Gastrocnemius medialis (tissue), 4 donors: ENCODE measurements at regions of chr3 and their contacts with region 1.

Region 1: GRCh38 chr3:122679085-122679881 is 1.4 kb upstream of the PARP14 start:
- DNase-seq: peak; percentile 39 to 68
- ATAC-seq: peak; percentile 51 to 74
- H3K4me3 ChIP-seq: peak overlapping the region; percentile 84 to 98 (median 98)
- H3K27ac ChIP-seq: peak overlapping the region; percentile 84 to 87 (median 86)
- H3K4me1 ChIP-seq: peaks cover 21 to 24% of the 10 kb centered on the region in 2 donors
- H3K27me3 ChIP-seq: no peaks in the 10 kb centered on the region
- CTCF ChIP-seq: peak; percentile 71 to 84 (median 80)
- POLR2A ChIP-seq: no peak

Region 2: DNA sequence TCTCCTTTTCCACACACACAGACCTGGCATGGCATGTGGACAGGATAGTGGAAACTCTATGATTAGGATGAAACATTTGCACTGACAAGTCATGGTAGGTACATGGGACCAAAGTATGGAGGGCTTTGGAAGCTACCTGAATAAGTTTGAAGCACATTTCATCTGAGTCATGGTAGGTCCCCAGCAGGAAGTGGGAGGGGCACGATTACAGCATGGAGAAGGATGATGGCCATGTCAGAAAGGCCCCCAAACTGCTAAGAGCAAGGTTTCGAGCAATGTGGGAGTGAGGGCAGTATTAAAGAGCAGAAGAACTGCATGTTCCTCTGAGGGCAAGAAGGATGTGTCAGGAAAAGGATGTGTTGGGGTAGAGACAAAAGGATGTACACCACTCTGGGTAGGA is 405.8 kb before region 1 on chr3:
- in situ Hi-C with region 1: no loop called
- intact Hi-C with region 1: no loop called
- DNase-seq: no peak
- ATAC-seq: no peak
- H3K4me3 ChIP-seq: no peak overlapping the region
- H3K27ac ChIP-seq: no peak overlapping the region
- H3K4me1 ChIP-seq: no peaks in the 10 kb centered on the region
- H3K27me3 ChIP-seq: no peaks in the 10 kb centered on the region
- CTCF ChIP-seq: no peak
- POLR2A ChIP-seq: no peak

Region 3: DNA sequence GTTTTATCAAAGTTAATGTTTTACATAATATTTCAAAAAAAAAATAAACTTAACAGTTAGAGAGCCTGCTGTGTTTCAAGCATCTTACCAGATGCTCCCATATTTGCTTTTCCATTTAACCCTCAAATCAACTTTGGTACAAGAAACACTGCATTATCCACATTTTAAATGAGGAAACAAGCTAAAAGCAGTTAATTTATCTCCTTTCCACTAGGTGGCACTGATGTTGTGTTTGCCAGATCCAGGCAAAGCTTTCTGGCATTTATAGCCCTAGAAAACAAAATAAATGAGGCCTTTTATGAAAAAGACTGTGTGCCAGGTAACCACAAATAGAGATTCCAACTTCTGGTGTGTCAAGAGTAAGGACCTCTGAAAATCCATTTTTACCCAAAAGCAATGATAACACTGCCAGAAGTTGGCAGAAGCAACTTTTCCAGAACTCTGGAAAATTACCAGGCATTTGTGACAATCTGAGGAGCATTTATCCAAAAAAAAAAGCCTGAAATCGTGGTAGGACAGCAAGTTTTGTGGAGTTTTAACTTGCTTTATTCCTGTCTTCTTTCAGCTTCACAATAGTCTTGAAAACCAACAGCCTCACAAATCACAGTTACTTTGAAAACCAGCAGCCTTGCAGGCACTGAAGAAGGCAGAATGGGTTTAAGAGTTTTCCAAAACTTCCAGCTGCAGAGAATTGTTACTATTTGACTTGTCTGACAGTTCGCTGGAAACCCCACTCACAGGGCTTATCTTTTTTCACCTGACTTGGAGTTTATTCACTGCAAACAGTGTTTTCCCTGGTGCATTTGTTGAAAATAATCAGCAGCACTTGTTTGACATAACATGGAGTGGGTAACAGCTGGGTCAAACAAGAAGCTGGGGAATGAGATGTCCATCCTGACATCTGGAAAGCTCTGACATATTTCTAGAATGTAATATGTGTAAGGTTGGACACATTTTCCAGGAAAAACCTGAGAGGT is 286.1 kb before region 1 on chr3:
- in situ Hi-C with region 1: loop called (anchors 5 to 10 kb)
- intact Hi-C with region 1: loop called (anchors 2 kb)
- DNase-seq: no peak
- ATAC-seq: peak in 1 of 2 donors; percentile 37
- H3K4me3 ChIP-seq: no peak overlapping the region
- H3K27ac ChIP-seq: peak overlapping the region in 3 of 4 donors; percentile 6 to 29 (median 9)
- H3K4me1 ChIP-seq: peaks cover 0 to 23% of the 10 kb centered on the region in 2 donors
- H3K27me3 ChIP-seq: no peaks in the 10 kb centered on the region
- CTCF ChIP-seq: peak; percentile 54 to 83 (median 70)
- POLR2A ChIP-seq: no peak

Region 4: GRCh38 chr3:122458992-122459391 is 220.3 kb before region 1 on chr3:
- in situ Hi-C with region 1: no loop called
- intact Hi-C with region 1: loop called (anchors 5 kb)
- DNase-seq: no peak
- ATAC-seq: peak; percentile 33 to 42
- H3K4me3 ChIP-seq: no peak overlapping the region
- H3K27ac ChIP-seq: no peak overlapping the region
- H3K4me1 ChIP-seq: no peaks in the 10 kb centered on the region
- H3K27me3 ChIP-seq: no peaks in the 10 kb centered on the region
- CTCF ChIP-seq: peak in 4 of 5 experiments; percentile 14 to 36 (median 28)
- POLR2A ChIP-seq: no peak

Region 5: GRCh38 chr3:122555275-122556071 is 123.8 kb before region 1 on chr3:
- in situ Hi-C with region 1: loop called (anchors 5 to 25 kb)
- intact Hi-C with region 1: loop called (anchors 1 kb)
- DNase-seq: no peak
- ATAC-seq: no peak
- H3K4me3 ChIP-seq: no peak overlapping the region
- H3K27ac ChIP-seq: no peak overlapping the region
- H3K4me1 ChIP-seq: no peaks in the 10 kb centered on the region
- H3K27me3 ChIP-seq: no peaks in the 10 kb centered on the region
- CTCF ChIP-seq: no peak
- POLR2A ChIP-seq: no peak

Region 6: GRCh38 chr3:122564155-122564912 is 114.9 kb before region 1 on chr3 and contains the starts of genes DTX3L and PARP9:
- in situ Hi-C with region 1: loop called (anchors 5 to 25 kb)
- intact Hi-C with region 1: loop called (anchors 1 kb)
- DNase-seq: peak; percentile 66 to 74
- ATAC-seq: peak; percentile 91 to 94
- H3K4me3 ChIP-seq: peak within 1 kb of the TSS; percentile 63 to 99 (median 94)
- H3K27ac ChIP-seq: peak within 1 kb of the TSS; percentile 84 to 98 (median 90)
- H3K4me1 ChIP-seq: peaks cover 19 to 30% of the 10 kb centered on the region in 2 donors
- H3K27me3 ChIP-seq: no peaks in the 10 kb centered on the region
- CTCF ChIP-seq: no peak
- POLR2A ChIP-seq: peak; percentile 45 to 46
- total RNA-seq, gene DTX3L: 6.6 to 15.6 (median 9.4) TPM
- total RNA-seq, gene PARP9: 5.9 to 9.6 (median 8.2) TPM

Region 7: GRCh38 chr3:122793568-122794416 is 114.5 kb after region 1 on chr3 and contains the start of gene HSPBAP1:
- in situ Hi-C with region 1: no loop called
- intact Hi-C with region 1: loop called (anchors 5 kb)
- DNase-seq: peak; percentile 94 to 96
- ATAC-seq: peak; percentile 76 to 84
- H3K4me3 ChIP-seq: peak within 1 kb of the TSS; percentile 74 to 90 (median 78)
- H3K27ac ChIP-seq: peak within 1 kb of the TSS; percentile 95 to 99 (median 96)
- H3K4me1 ChIP-seq: peaks cover 55 to 56% of the 10 kb centered on the region in 2 donors
- H3K27me3 ChIP-seq: no peaks in the 10 kb centered on the region
- CTCF ChIP-seq: peak in 2 of 5 experiments; percentile 39 to 50
- POLR2A ChIP-seq: peak; percentile 96
- total RNA-seq, gene HSPBAP1: 14.5 to 30.7 (median 17.0) TPM

Region 8: DNA sequence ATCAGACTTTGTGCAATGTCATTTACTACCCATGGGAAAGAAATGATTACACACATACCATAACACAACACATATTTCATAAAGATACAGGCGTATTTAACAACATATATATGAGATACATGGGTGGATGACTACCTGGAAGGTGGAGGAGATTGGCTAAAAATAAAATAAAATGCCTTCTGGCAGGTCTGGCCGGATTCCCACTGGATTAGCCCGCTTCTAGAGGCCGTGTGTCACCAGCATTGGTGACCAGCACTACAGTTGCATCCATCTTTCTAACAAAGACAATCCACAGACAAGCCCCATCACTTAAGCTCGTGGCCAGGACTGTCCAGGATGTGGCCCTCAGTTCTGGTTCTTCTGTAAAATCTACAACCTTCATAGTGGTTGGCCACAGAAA is 501.5 kb after region 1 on chr3:
- in situ Hi-C with region 1: no loop called
- intact Hi-C with region 1: no loop called
- DNase-seq: no peak
- ATAC-seq: no peak
- H3K4me3 ChIP-seq: no peak overlapping the region
- H3K27ac ChIP-seq: no peak overlapping the region
- H3K4me1 ChIP-seq: no peaks in the 10 kb centered on the region
- H3K27me3 ChIP-seq: no peaks in the 10 kb centered on the region
- CTCF ChIP-seq: no peak
- POLR2A ChIP-seq: no peak